Activated CD4-positive, alpha-beta T cell treated with anti-CD3 and anti-CD28 coated beads, Interleukin-2, amount 10 ng/mL, durations not matched to agents 7 days and 5 days (primary cell): ENCODE measurements at regions of chr2 and their contacts with region 1.

Region 1: DNA sequence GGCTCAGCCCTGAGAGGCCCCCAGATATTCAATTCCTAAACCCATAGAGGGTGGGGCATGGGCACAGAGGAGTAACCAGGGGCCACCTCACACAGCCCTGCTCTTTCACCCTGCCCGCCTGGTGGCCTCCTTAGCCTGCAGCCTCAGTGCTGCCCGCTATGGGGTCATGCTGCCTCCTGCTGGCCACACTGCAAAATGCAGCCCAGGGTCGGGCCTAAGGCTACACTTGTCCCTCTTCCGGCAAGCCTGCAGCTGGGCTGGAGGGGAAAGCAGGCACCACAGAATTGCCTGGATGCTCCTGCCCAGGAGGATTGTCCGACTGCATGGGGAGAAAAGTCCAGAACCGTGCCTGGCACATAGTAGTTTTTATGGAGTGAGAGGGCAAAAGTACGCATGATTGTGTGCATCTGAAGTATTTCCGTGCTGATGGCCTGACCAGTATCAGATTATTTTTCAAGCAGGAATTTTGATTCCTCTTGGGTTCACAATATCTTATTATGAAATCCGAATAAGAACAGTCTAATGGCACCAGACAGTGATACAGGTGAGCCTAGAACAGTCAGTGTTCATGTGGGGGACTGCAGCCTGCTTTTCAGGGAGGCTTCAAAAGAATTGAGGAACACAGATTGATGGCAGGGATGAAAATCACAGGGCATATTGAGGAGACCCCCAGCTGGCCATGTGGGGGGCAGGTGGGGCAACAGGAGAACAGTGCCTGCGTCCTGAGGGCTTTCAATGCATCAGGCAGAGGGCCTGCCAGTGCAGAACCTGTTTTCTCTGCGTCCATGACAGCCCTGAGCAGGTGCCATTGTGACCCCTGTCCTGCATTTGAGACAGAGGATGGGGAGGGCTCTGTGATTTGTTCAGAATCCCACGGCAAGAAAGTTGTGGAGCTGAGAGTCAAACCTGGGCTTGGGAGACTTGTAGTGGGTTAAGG is 51.2 kb upstream of the ALPP start:
- DNase-seq: peak; percentile 88
- H3K4me3 Mint-ChIP-seq: no peak overlapping the region
- H3K27ac Mint-ChIP-seq: no peak overlapping the region
- H3K4me1 Mint-ChIP-seq: peaks cover 16% of the 10 kb centered on the region
- H3K27me3 Mint-ChIP-seq: no peaks in the 10 kb centered on the region

Region 2: DNA sequence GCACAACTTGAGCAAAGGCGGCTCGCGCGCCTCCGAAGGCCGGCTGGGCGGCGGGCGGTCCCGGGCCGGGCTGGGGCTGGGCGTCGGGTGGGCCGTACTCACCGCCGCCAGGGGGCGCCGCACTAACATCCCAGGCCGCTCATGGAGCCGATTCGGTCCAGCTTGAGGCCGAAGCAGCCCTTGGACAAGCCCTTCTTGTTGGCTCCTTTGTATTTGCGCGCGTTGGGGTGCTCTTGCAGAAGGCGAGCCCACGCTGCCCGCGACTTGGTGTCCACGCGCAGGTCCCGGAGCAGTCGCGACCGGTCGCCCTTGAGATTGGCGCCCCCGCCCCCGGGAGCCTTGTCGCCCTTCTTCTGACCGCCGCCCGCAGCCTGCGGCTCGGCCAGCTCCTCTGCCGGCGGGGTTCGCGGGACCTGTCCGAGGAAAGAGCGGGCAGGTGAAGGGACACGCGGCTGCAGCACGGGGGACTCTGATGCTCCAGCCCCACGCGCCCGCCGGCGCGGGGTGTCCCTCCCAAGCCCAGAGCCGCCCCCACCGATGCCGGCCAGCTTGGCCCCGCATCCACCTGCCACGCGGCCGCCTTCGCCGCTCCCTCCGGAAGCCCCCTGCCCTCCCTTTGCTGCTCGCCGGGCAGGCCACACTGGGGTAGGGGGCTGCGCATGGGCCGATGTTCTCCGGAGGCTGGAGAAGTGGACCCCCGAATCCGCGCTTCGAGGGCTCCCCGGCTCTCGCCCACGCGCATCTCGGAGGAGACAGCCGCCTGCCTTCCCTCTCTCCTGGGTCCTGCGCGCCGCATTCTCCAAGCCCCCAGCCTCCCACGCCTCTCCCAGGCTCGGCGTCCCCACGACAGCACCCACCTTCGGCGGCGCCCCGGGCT is 401.8 kb before region 1 on chr2:
- CTCF ChIA-PET with region 1: interaction called, 20 read pairs
- POLR2A ChIA-PET with region 1: no interaction called
- DNase-seq: peak; percentile 64
- H3K4me3 Mint-ChIP-seq: peak overlapping the region; percentile 7
- H3K27ac Mint-ChIP-seq: no peak overlapping the region
- H3K4me1 Mint-ChIP-seq: peaks cover 10% of the 10 kb centered on the region
- H3K27me3 Mint-ChIP-seq: peaks cover 50% of the 10 kb centered on the region

Region 3: DNA sequence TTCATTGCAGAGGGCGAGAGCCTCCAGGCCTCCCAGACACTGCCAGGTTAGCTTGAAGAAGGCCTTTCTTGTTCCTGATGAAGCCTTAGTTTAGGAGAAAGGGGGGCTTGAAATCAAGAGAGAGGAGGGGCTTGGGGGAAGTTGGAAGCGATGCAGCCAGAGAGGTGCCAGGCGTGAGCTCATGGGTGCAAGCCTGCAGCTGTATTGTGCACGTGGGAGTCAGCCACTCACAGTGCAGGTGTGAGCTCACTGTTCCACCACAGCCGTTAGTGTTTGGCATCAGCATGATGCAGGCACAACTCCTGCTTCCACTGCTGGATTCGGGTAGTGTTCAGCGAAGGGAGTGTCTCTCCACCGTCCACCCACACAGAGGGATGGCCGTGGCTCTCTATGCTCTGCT is 17.3 kb before region 1 on chr2:
- CTCF ChIA-PET with region 1: interaction called, 31 read pairs
- POLR2A ChIA-PET with region 1: no interaction called
- DNase-seq: peak; percentile 46
- H3K4me3 Mint-ChIP-seq: peak overlapping the region; percentile 47
- H3K27ac Mint-ChIP-seq: peak overlapping the region; percentile 95
- H3K4me1 Mint-ChIP-seq: peaks cover 74% of the 10 kb centered on the region
- H3K27me3 Mint-ChIP-seq: no peaks in the 10 kb centered on the region

Region 4: GRCh38 chr2:232315049-232315922 is 12.1 kb before region 1 on chr2:
- CTCF ChIA-PET with region 1: interaction called, 31 read pairs
- POLR2A ChIA-PET with region 1: no interaction called
- DNase-seq: peak; percentile 89
- H3K4me3 Mint-ChIP-seq: peak overlapping the region; percentile 58
- H3K27ac Mint-ChIP-seq: peak overlapping the region; percentile 94
- H3K4me1 Mint-ChIP-seq: peaks cover 90% of the 10 kb centered on the region
- H3K27me3 Mint-ChIP-seq: no peaks in the 10 kb centered on the region

Region 5: GRCh38 chr2:232339121-232340081 is 12.0 kb after region 1 on chr2:
- CTCF ChIA-PET with region 1: interaction called, 10 read pairs
- POLR2A ChIA-PET with region 1: no interaction called
- DNase-seq: no peak
- H3K4me3 Mint-ChIP-seq: no peak overlapping the region
- H3K27ac Mint-ChIP-seq: no peak overlapping the region
- H3K4me1 Mint-ChIP-seq: no peaks in the 10 kb centered on the region
- H3K27me3 Mint-ChIP-seq: peaks cover 3% of the 10 kb centered on the region

Region 6: DNA sequence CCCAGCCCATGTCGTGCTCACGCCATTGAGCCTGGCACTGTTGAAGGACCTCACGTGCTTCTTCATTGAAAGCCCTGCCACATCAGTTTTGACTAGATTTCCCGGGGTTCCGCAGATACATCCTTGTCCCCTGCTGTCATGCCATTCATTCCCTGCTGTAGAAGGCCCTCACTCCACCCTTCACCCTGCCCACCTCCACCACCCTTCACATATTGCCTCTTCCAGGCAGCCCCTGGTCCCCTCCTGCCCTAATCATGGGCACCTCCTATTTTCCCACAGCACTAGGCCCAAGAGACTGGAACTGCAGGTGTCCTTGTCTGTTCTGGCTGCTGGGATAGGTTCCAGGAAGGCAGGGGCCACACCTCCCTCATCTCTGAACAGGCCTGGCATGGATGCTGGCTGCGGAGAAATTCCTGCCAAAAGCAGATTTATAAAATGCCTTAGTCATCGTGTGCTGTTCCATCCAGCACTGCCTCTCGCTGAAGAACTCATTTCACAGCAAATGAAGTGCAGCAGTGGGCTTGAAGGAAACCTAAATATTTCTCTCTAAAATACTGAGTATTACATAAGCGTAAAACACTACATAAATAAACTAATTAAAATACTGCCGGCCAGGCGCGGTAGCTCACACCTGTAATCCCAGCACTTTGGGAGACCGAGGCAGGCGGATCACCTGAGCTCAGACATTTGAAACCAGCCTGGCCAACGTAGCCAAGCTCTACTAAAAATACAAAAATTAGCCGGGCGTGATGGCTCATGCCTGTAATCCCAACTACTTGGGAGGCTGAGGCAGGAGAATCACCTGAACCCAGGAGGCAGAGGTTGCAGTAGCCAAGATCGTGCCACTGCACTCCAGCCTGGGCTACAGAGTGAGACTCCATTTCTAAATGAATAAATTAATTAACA is 261.6 kb after region 1 on chr2:
- CTCF ChIA-PET with region 1: no interaction called
- POLR2A ChIA-PET with region 1: no interaction called
- DNase-seq: no peak
- H3K4me3 Mint-ChIP-seq: no peak overlapping the region
- H3K27ac Mint-ChIP-seq: no peak overlapping the region
- H3K4me1 Mint-ChIP-seq: peaks cover 8% of the 10 kb centered on the region
- H3K27me3 Mint-ChIP-seq: peaks cover 1% of the 10 kb centered on the region